ENCODE measurements at regions of chr6 and their contacts with region 1.

Region 1: GRCh38 chr6:37850728-37851285 is 31.3 kb downstream of the ZFAND3 start:
- DNase-seq: no peak
- ATAC-seq: no peak
- H3K4me3 ChIP-seq: no peak overlapping the region
- H3K27ac ChIP-seq: no peak overlapping the region
- H3K4me1 ChIP-seq: peaks cover 0 to 63% (median 31%) of the 10 kb centered on the region in 12 donors
- H3K27me3 ChIP-seq: no peaks in the 10 kb centered on the region
- CTCF ChIP-seq: no peak
- POLR2A ChIP-seq: no peak

Region 2: DNA sequence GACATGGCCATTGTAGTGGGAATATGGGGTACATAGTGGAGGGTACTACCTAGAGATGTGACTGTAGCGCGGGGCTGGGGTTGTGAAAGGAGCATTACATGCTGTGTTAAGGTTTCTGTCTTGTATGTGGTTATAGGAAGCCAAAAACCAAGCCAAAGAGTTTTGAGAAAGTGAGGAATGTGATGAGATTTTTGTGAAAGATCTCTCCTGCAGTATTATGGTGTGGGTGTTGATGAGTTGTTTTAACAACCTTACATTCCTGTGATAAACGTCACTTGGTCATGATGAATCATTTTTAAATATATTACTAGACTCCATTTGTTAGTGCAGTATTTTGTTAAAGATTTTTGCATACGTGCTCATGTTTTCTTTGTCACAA is 17.6 kb after region 1 on chr6:
- intact Hi-C with region 1: loop called in 1 of 10 experiments (anchors 2 kb)
- DNase-seq: no peak
- ATAC-seq: peak in 2 of 4 donors; percentile 31 to 53
- H3K4me3 ChIP-seq: no peak overlapping the region
- H3K27ac ChIP-seq: no peak overlapping the region
- H3K4me1 ChIP-seq: peaks cover 0 to 56% (median 28%) of the 10 kb centered on the region in 12 donors
- H3K27me3 ChIP-seq: no peaks in the 10 kb centered on the region
- CTCF ChIP-seq: no peak
- POLR2A ChIP-seq: no peak

Measured in heart left ventricle (tissue), 16 donors.